ENCODE measurements at regions of chr2 and their contacts with region 1.

Region 1: DNA sequence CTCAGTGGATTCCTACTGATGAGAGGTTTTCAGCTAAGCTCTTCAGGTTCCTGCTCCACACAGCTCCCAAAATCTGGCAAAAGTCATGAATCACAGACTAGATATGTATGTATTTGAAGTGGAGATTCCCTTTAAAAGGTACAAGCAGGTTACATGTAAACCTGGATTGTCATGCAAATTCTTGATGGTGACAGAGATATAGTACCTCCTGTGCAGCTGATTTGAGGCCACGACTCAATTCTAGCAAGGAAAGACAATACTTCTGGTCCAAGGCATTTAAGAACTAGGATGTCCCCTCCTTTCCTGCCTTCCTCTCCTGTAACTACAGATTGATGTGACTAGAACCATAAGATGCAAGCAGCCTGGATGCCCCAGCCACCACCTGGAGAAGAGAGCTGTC is 55.0 kb downstream of the GORASP2 start:
- DNase-seq: no peak

Region 2: DNA sequence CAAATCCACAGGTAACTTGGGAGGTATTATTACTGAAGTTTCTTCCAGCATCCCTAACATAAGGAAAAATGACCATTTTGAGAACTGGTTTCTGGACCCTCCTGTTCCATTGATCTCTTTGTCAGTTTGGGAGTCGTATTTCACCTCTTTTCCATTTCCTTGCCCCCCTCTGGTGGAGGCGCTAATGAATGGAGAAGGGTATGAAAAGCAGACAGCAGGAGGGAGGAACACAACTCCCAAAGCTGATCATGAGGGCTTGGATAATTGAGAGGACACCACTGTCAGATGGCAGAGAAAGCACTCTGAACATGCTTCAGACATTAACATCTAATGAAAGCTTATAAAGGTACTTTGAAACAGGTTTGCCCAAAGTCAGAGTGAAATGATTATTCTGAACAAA is 233.3 kb after region 1 on chr2:
- intact Hi-C with region 1: loop called in 1 of 2 experiments (anchors 2 kb)
- DNase-seq: no peak